Naive thymus-derived CD4-positive, alpha-beta T cell (primary cell): ENCODE measurements at regions of chr7 and their contacts with region 1.

Region 1: GRCh38 chr7:41881331-41882130 is 178.6 kb upstream of the INHBA start:
- DNase-seq: peak; percentile 27 to 85 (median 64)
- ATAC-seq: peak; percentile 93
- H3K4me3 ChIP-seq: peak overlapping the region; percentile 50
- H3K4me3 Mint-ChIP-seq: peak overlapping the region; percentile 60 to 89 (median 78)
- H3K27ac ChIP-seq: peak overlapping the region; percentile 64
- H3K27ac Mint-ChIP-seq: peak overlapping the region; percentile 84 to 99 (median 94)
- H3K4me1 ChIP-seq: peaks cover 7 to 13% of the 10 kb centered on the region in 2 donors
- H3K4me1 Mint-ChIP-seq: peaks cover 10 to 35% (median 22%) of the 10 kb centered on the region in 7 donors
- H3K27me3 ChIP-seq: no peaks in the 10 kb centered on the region
- H3K27me3 Mint-ChIP-seq: peaks cover 0 to 6% (median 0%) of the 10 kb centered on the region in 5 donors

Region 2: DNA sequence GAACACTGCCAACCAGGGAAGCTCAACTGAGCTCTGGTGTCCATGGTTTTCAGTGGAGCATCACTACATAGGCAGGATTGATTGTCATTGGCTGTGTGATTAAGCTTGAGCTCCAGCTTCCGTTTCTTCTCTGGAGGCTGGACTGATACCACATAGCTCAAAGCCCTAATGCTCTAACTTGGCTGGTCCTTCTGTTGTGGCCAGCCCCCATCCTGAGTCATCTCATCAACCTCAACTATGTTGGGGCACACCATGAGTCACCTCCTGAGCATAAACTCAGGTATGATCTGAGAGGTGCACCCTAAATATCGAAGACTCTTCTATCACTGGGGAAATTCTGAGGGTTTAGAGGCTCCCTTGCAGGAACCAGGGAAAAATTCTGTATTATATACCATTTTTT is 64.1 kb before region 1 on chr7:
- CTCF ChIA-PET with region 1: no interaction called
- POLR2A ChIA-PET with region 1: no interaction called
- intact Hi-C with region 1: loop called in 1 of 2 experiments (anchors 1 kb)
- DNase-seq: peak in 1 of 9 donors; percentile 39
- ATAC-seq: peak; percentile 37
- H3K4me3 ChIP-seq: no peak overlapping the region
- H3K4me3 Mint-ChIP-seq: no peak overlapping the region
- H3K27ac ChIP-seq: no peak overlapping the region
- H3K27ac Mint-ChIP-seq: no peak overlapping the region
- H3K4me1 ChIP-seq: no peaks in the 10 kb centered on the region
- H3K4me1 Mint-ChIP-seq: peaks cover 0 to 35% (median 0%) of the 10 kb centered on the region in 7 donors
- H3K27me3 ChIP-seq: no peaks in the 10 kb centered on the region
- H3K27me3 Mint-ChIP-seq: peaks cover 0 to 21% (median 5%) of the 10 kb centered on the region in 5 donors

Region 3: DNA sequence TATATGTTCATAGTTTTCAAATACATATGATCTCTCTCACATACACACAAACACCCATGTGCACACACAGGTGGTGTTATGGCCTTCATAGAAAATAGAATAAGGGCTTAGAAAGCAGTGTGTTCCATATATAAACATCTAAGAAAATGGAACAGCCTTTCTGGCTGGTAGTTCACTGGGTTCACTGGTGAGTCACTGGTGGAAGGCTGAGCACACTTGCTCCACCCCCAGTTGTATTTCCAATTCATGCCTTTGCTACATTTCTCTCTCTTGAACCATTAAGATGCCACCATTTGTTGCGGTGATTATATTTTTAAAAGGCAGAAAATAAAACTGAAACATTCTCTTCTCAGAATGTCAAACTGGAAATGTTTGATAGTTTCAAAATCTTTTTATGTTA is 103.4 kb after region 1 on chr7:
- CTCF ChIA-PET with region 1: no interaction called
- POLR2A ChIA-PET with region 1: no interaction called
- intact Hi-C with region 1: no loop called
- DNase-seq: no peak
- ATAC-seq: no peak
- H3K4me3 ChIP-seq: no peak overlapping the region
- H3K4me3 Mint-ChIP-seq: no peak overlapping the region
- H3K27ac ChIP-seq: no peak overlapping the region
- H3K27ac Mint-ChIP-seq: no peak overlapping the region
- H3K4me1 ChIP-seq: no peaks in the 10 kb centered on the region
- H3K4me1 Mint-ChIP-seq: no peaks in the 10 kb centered on the region
- H3K27me3 ChIP-seq: no peaks in the 10 kb centered on the region
- H3K27me3 Mint-ChIP-seq: peaks cover 6 to 18% (median 11%) of the 10 kb centered on the region in 5 donors